ENCODE measurements at regions of chr12 and their contacts with region 1.

Region 1: GRCh38 chr12:12716793-12717585 is at the start of gene CDKN1B:
- DNase-seq: peak; percentile 94
- ATAC-seq: peak; percentile 69
- H3K4me3 Mint-ChIP-seq: peak within 1 kb of the TSS; percentile 96
- H3K27ac Mint-ChIP-seq: peak within 1 kb of the TSS; percentile 100
- H3K4me1 Mint-ChIP-seq: peaks cover 41% of the 10 kb centered on the region
- H3K27me3 Mint-ChIP-seq: no peaks in the 10 kb centered on the region
- total RNA-seq, gene CDKN1B: 99.2 to 105 TPM

Region 2: GRCh38 chr12:12505544-12506495 is 211.2 kb before region 1 on chr12:
- CTCF ChIA-PET with region 1: no interaction called
- DNase-seq: no peak
- ATAC-seq: peak; percentile 75
- H3K4me3 Mint-ChIP-seq: peak overlapping the region; percentile 17
- H3K27ac Mint-ChIP-seq: peak overlapping the region; percentile 67
- H3K4me1 Mint-ChIP-seq: peaks cover 51% of the 10 kb centered on the region
- H3K27me3 Mint-ChIP-seq: no peaks in the 10 kb centered on the region

Region 3: GRCh38 chr12:12696562-12697383 is 20.2 kb before region 1 on chr12:
- CTCF ChIA-PET with region 1: interaction called, 11 read pairs
- DNase-seq: peak; percentile 96
- ATAC-seq: peak; percentile 84
- H3K4me3 Mint-ChIP-seq: peak overlapping the region; percentile 81
- H3K27ac Mint-ChIP-seq: peak overlapping the region; percentile 100
- H3K4me1 Mint-ChIP-seq: peaks cover 60% of the 10 kb centered on the region
- H3K27me3 Mint-ChIP-seq: no peaks in the 10 kb centered on the region

Measured in activated CD8-positive, alpha-beta memory T cell treated with anti-CD3 and anti-CD28 coated beads, Interleukin-2, amount 10 ng/mL, durations not matched to agents 7 days and 5 days (primary cell).